ENCODE measurements at regions of chr5 and their contacts with region 1.

Region 1: GRCh38 chr5:43105369-43106289 is 15.1 kb upstream of the ZNF131 start:
- DNase-seq: peak; percentile 92
- H3K4me3 Mint-ChIP-seq: peak overlapping the region; percentile 75
- H3K27ac Mint-ChIP-seq: peak overlapping the region; percentile 79
- H3K4me1 Mint-ChIP-seq: peaks cover 49% of the 10 kb centered on the region
- H3K27me3 Mint-ChIP-seq: no peaks in the 10 kb centered on the region

Region 2: GRCh38 chr5:42908509-42909488 is 196.8 kb before region 1 on chr5:
- CTCF ChIA-PET with region 1: interaction called, 4 read pairs
- POLR2A ChIA-PET with region 1: no interaction called
- intact Hi-C with region 1: loop called (anchors 2 kb)
- DNase-seq: peak; percentile 93
- H3K4me3 Mint-ChIP-seq: peak overlapping the region; percentile 82
- H3K27ac Mint-ChIP-seq: peak overlapping the region; percentile 70
- H3K4me1 Mint-ChIP-seq: peaks cover 10% of the 10 kb centered on the region
- H3K27me3 Mint-ChIP-seq: peaks cover 10% of the 10 kb centered on the region

Region 3: DNA sequence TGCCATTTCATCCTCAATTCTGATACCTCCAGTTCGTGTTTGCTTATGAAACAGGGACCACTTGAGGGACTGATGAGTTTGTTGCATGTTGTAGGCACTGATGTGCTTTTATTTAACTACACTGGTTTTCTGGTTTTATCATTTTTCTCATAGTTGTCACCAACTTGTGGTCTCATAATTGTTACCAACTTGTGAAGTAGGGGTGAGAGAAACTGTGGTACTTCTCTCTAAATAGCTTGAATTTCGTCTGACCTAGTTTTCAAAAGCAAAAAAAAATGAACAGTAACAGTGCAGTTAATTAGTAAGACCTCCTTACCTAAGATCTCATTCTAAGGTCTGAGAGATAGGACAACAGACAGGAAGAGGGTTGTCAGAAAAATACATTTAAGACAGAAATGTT is 143.5 kb before region 1 on chr5:
- CTCF ChIA-PET with region 1: no interaction called
- POLR2A ChIA-PET with region 1: no interaction called
- intact Hi-C with region 1: no loop called
- DNase-seq: no peak
- H3K4me3 Mint-ChIP-seq: no peak overlapping the region
- H3K27ac Mint-ChIP-seq: no peak overlapping the region
- H3K4me1 Mint-ChIP-seq: peaks cover 12% of the 10 kb centered on the region
- H3K27me3 Mint-ChIP-seq: no peaks in the 10 kb centered on the region

Region 4: DNA sequence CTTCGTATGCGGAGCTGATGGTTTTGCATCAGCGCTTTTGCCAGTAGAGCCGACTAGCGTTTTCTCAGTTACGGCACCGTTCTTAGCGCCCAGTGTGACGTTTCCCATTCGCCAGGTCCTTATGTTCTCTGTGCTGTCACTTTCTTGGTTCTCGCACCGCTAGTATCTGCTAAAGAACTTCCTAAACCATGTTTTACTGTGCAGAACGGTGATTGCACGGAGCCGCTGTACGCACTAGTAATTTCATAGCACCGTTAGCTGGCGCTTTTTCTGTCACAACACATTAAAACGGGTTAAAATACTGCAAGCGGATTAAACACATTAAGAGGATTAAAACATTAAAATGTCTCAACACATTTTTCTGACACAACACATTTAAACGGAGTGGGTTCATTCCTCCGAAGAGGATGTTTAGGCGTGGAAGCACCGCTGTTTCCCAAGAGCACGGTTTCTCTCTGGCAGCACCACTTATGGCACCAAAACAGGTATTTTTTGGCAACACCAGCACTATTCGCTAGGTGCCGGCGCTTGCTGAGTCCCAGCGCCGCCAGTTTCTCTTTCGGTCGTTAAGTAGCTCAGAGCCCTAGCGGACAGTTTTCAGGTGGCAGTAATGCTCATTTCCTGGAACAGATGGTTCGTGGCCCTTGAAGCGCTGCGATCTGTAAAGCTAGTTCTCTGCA is 85.9 kb before region 1 on chr5:
- CTCF ChIA-PET with region 1: interaction called, 4 read pairs
- POLR2A ChIA-PET with region 1: no interaction called
- intact Hi-C with region 1: loop called (anchors 5 kb)
- DNase-seq: peak; percentile 91
- H3K4me3 Mint-ChIP-seq: peak overlapping the region; percentile 97
- H3K27ac Mint-ChIP-seq: peak overlapping the region; percentile 98
- H3K4me1 Mint-ChIP-seq: peaks cover 32% of the 10 kb centered on the region
- H3K27me3 Mint-ChIP-seq: no peaks in the 10 kb centered on the region

Region 5: GRCh38 chr5:43140286-43140685 is 34.7 kb after region 1 on chr5:
- CTCF ChIA-PET with region 1: interaction called, 8 read pairs
- POLR2A ChIA-PET with region 1: no interaction called
- intact Hi-C with region 1: loop called (anchors 1 kb)
- DNase-seq: no peak
- H3K4me3 Mint-ChIP-seq: no peak overlapping the region
- H3K27ac Mint-ChIP-seq: peak overlapping the region; percentile 34
- H3K4me1 Mint-ChIP-seq: peaks cover 41% of the 10 kb centered on the region
- H3K27me3 Mint-ChIP-seq: no peaks in the 10 kb centered on the region

Region 6: GRCh38 chr5:43305948-43306565 is 200.4 kb after region 1 on chr5:
- CTCF ChIA-PET with region 1: interaction called, 9 read pairs
- POLR2A ChIA-PET with region 1: interaction called, 3 read pairs
- intact Hi-C with region 1: loop called (anchors 1 kb)
- DNase-seq: no peak
- H3K4me3 Mint-ChIP-seq: peak overlapping the region; percentile 2
- H3K27ac Mint-ChIP-seq: peak overlapping the region; percentile 78
- H3K4me1 Mint-ChIP-seq: peaks cover 84% of the 10 kb centered on the region
- H3K27me3 Mint-ChIP-seq: no peaks in the 10 kb centered on the region

Region 7: GRCh38 chr5:43602461-43603343 is 497.1 kb after region 1 on chr5 and contains the start of gene NNT:
- CTCF ChIA-PET with region 1: interaction called, 3 read pairs
- POLR2A ChIA-PET with region 1: no interaction called
- intact Hi-C with region 1: loop called (anchors 5 kb)
- DNase-seq: peak; percentile 84
- H3K4me3 Mint-ChIP-seq: peak within 1 kb of the TSS; percentile 97
- H3K27ac Mint-ChIP-seq: peak within 1 kb of the TSS; percentile 93
- H3K4me1 Mint-ChIP-seq: peaks cover 35% of the 10 kb centered on the region
- H3K27me3 Mint-ChIP-seq: no peaks in the 10 kb centered on the region
- total RNA-seq, gene NNT: 96.6 to 99.9 TPM

Region 8: GRCh38 chr5:43753069-43753468 is 647.4 kb after region 1 on chr5:
- CTCF ChIA-PET with region 1: no interaction called
- POLR2A ChIA-PET with region 1: no interaction called
- intact Hi-C with region 1: no loop called
- DNase-seq: no peak
- H3K4me3 Mint-ChIP-seq: no peak overlapping the region
- H3K27ac Mint-ChIP-seq: no peak overlapping the region
- H3K4me1 Mint-ChIP-seq: no peaks in the 10 kb centered on the region
- H3K27me3 Mint-ChIP-seq: no peaks in the 10 kb centered on the region